Heart left ventricle (tissue), 16 donors: ENCODE measurements at regions of chr19 and their contacts with region 1.

Region 1: DNA sequence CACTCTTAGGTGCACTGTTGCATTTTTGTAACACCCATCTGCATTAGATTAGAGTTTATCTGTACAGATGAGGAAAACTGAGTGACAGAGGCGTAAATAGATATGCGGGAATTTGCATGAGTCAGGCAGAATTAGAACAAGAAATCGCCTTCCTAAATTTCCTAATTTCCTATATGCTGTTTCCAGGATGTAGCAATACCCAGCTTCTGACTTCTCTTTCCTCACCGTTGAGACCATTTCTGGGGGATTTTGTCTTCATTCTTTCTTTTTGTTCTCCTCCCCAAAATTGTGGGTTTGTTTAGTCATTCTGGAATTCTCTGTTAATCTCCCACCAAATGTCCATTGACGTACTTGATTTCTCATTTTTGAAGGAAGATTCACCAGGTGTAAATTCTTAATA is 10.6 kb upstream of the ZNF792 start:
- DNase-seq: no peak
- ATAC-seq: no peak
- H3K4me3 ChIP-seq: no peak overlapping the region
- H3K27ac ChIP-seq: peak overlapping the region in 1 of 12 donors; percentile 30
- H3K4me1 ChIP-seq: peaks cover 0 to 25% (median 0%) of the 10 kb centered on the region in 12 donors
- H3K27me3 ChIP-seq: no peaks in the 10 kb centered on the region
- CTCF ChIP-seq: no peak
- POLR2A ChIP-seq: no peak

Region 2: GRCh38 chr19:34832581-34833112 is 142.0 kb before region 1 on chr19:
- intact Hi-C with region 1: no loop called
- DNase-seq: peak in 1 of 5 donors; percentile 12
- ATAC-seq: peak in 1 of 4 donors; percentile 25
- H3K4me3 ChIP-seq: no peak overlapping the region
- H3K27ac ChIP-seq: no peak overlapping the region
- H3K4me1 ChIP-seq: peaks cover 0 to 20% (median 7%) of the 10 kb centered on the region in 12 donors
- H3K27me3 ChIP-seq: no peaks in the 10 kb centered on the region
- CTCF ChIP-seq: no peak
- POLR2A ChIP-seq: no peak

Region 3: GRCh38 chr19:34994643-34995541 is 20.2 kb after region 1 on chr19:
- intact Hi-C with region 1: loop called in 1 of 10 experiments (anchors 1 kb)
- DNase-seq: peak in 3 of 5 donors; percentile 58 to 63 (median 59)
- ATAC-seq: peak; percentile 24 to 73 (median 62)
- H3K4me3 ChIP-seq: peak overlapping the region in 2 of 12 donors; percentile 7 to 14
- H3K27ac ChIP-seq: peak overlapping the region; percentile 48 to 100 (median 84)
- H3K4me1 ChIP-seq: peaks cover 0 to 62% (median 38%) of the 10 kb centered on the region in 12 donors
- H3K27me3 ChIP-seq: no peaks in the 10 kb centered on the region
- CTCF ChIP-seq: no peak
- POLR2A ChIP-seq: no peak

Region 4: GRCh38 chr19:35013031-35013819 is 38.6 kb after region 1 on chr19:
- intact Hi-C with region 1: loop called (anchors 1 to 2 kb)
- DNase-seq: peak; percentile 78 to 90 (median 80)
- ATAC-seq: peak; percentile 52 to 74 (median 69)
- H3K4me3 ChIP-seq: no peak overlapping the region
- H3K27ac ChIP-seq: peak overlapping the region in 7 of 12 donors; percentile 8 to 80 (median 55)
- H3K4me1 ChIP-seq: peaks cover 0 to 63% (median 17%) of the 10 kb centered on the region in 12 donors
- H3K27me3 ChIP-seq: no peaks in the 10 kb centered on the region
- CTCF ChIP-seq: peak; percentile 96 to 99 (median 97)
- POLR2A ChIP-seq: peak in 1 of 2 donors; percentile 19

Region 5: GRCh38 chr19:35076657-35077056 is 102.0 kb after region 1 on chr19:
- intact Hi-C with region 1: no loop called
- DNase-seq: no peak
- ATAC-seq: no peak
- H3K4me3 ChIP-seq: no peak overlapping the region
- H3K27ac ChIP-seq: no peak overlapping the region
- H3K4me1 ChIP-seq: no peaks in the 10 kb centered on the region
- H3K27me3 ChIP-seq: no peaks in the 10 kb centered on the region
- CTCF ChIP-seq: no peak
- POLR2A ChIP-seq: no peak

Region 6: DNA sequence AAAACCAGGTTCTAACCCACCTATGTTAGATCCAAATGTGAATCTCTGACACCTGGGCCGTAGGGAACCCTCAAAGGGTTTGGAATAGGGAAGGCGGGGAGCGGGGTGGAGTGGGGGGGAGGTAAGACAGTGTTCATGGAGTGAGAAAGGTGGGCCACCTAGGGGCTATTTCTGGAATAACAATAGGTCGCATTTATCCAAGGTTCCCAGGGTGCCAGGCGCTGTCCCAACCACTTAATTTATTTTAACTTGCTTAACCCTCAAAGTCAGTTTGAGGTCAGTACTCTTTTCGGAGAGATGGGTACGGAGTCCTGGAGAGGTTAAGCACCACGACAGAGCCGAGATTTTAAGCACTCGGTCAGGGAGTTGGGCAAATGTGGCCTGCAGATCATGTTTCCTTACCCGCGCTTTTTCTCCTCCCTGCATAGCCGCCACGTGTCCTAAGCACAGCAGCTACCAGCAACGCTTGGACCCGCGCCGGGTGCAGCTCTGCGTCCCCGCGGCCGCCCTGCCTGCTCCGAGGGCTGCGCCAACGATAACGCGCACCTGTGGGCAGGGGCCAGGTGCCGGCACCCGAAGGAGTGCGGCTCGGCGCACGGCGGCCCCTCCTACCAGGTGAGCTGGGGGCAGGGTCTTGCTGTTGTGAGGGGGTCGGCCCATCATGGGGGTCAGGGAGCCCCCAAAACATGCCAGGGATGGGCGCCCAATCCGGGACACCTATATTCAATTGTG is 116.0 kb after region 1 on chr19:
- intact Hi-C with region 1: loop called in 8 of 10 experiments (anchors 1 to 5 kb)
- DNase-seq: peak in 3 of 5 donors; percentile 36 to 55 (median 54)
- ATAC-seq: peak; percentile 79 to 91 (median 84)
- H3K4me3 ChIP-seq: no peak overlapping the region
- H3K27ac ChIP-seq: no peak overlapping the region
- H3K4me1 ChIP-seq: peaks cover 0 to 9% (median 4%) of the 10 kb centered on the region in 12 donors
- H3K27me3 ChIP-seq: peaks cover 0 to 26% (median 7%) of the 10 kb centered on the region in 9 donors
- CTCF ChIP-seq: peak; percentile 41 to 71 (median 64)
- POLR2A ChIP-seq: no peak

Region 7: DNA sequence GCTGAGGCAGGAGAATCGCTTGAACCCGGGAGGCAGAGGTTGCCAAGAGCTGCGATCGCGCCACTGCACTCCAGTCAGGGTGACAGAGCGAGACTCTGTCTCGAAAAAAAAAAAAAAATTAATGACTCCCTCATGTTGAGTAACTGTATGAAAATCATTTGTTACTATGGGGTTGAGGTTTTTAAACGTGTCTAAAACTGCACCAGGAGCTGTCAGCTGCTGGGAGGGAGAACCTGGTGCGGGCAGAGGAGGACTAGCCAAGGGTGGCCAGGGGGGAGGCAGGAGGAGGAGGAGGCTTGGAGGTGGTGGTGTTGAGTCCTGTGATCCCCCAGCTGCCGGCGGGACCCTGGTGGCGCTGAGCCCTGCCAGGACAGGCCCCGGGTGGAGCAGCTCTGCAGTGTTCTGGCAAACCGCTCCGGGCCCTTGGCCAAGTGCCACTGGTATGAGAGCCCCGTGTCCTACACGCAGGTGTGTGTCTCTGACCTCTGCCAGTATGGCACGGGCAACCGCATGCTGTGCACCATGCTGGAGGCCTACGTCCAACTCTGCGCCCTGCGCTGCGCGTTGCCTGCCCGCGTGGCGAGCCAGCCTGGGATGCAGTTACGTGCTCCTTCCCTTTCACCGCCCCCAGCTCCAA is 123.9 kb after region 1 on chr19:
- intact Hi-C with region 1: loop called in 4 of 10 experiments (anchors 5 kb)
- DNase-seq: peak in 4 of 5 donors; percentile 38 to 65 (median 54)
- ATAC-seq: peak; percentile 55 to 70 (median 66)
- H3K4me3 ChIP-seq: no peak overlapping the region
- H3K27ac ChIP-seq: no peak overlapping the region
- H3K4me1 ChIP-seq: peaks cover 0 to 5% (median 0%) of the 10 kb centered on the region in 12 donors
- H3K27me3 ChIP-seq: no peaks in the 10 kb centered on the region
- CTCF ChIP-seq: no peak
- POLR2A ChIP-seq: no peak

Region 8: DNA sequence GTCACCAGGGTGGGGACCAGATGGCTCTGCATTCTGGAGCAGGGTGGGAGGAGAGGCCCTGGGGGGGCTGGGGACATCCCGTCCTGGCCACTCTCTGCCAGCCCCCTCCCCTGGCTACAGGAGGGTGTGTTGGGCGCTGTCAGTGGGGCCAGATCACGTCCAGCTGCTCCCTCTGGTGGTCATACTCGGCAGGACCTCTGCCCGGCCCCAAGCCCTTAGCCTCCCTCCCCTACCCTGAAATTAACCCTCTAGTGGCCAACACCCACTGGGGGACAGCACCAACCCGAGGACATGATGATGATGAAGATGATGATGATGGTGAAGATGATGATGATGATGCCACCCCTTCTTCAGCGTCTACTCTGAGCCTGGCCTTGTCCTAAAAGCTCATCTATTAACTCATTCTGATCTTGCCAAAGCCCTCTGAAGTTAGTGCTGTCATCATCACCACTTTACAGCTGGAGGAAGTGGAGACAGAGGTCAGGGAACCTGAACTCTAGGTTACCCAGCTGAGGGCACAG is 160.8 kb after region 1 on chr19:
- intact Hi-C with region 1: loop called in 1 of 10 experiments (anchors 5 kb)
- DNase-seq: peak; percentile 78 to 87 (median 82)
- ATAC-seq: peak; percentile 32 to 56 (median 54)
- H3K4me3 ChIP-seq: peak overlapping the region in 9 of 12 donors; percentile 28 to 53 (median 43)
- H3K27ac ChIP-seq: peak overlapping the region in 10 of 12 donors; percentile 54 to 76 (median 68)
- H3K4me1 ChIP-seq: peaks cover 0 to 50% (median 27%) of the 10 kb centered on the region in 12 donors
- H3K27me3 ChIP-seq: peaks cover 0 to 8% (median 0%) of the 10 kb centered on the region in 9 donors
- CTCF ChIP-seq: peak; percentile 86 to 97 (median 90)
- POLR2A ChIP-seq: no peak